ENCODE measurements at regions of chr6 and their contacts with region 1.

Region 1: DNA sequence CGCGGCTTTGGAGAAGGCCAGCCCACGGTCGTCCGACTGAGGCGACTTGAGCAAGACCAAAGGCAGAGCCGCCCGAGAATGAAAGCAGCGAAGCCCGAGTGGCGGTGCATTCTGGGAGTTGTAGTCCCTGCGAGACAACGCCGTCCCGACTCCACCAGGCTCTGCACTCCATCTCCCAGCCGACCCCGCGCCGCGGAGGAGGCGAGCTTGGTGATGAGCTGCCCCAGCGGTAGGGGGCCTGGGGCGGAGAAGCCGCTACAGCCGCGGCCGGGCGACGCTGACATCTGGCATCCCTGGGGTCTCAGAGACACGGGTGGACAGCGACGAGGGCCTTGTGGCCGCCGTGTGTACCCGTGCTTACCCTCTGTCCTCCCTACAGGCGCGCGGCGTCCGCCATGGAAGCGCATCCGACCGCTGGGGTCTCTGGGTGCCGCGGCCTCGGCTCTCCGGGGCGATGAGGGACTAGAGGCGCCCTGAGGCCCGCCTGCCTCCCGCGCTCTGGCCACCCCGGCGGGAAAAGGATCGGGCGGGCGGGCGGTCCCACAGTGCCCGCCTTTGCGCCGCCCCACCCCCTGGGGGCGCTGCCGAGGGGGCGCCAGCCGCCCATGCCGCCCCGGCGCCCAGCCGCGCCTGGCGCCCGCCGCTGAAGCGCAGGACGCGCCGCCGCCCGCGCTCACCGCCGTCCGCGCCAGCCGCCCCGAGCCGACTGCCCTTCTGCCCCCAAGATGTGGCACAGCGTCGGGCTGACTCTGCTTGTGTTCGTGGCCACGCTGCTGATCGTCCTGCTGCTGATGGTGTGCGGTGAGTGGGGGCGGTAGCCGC is at the start of gene SMIM13:
- DNase-seq: peak; percentile 85 to 94 (median 93)
- ATAC-seq: peak; percentile 96
- H3K4me3 ChIP-seq: peak within 1 kb of the TSS; percentile 97
- H3K4me3 Mint-ChIP-seq: peak within 1 kb of the TSS; percentile 83 to 98 (median 97)
- H3K27ac ChIP-seq: peak within 1 kb of the TSS; percentile 88
- H3K27ac Mint-ChIP-seq: peak within 1 kb of the TSS; percentile 89 to 98 (median 97)
- H3K4me1 ChIP-seq: peaks cover 11 to 14% of the 10 kb centered on the region in 2 donors
- H3K4me1 Mint-ChIP-seq: peaks cover 21 to 43% (median 27%) of the 10 kb centered on the region in 7 donors
- H3K27me3 ChIP-seq: no peaks in the 10 kb centered on the region
- H3K27me3 Mint-ChIP-seq: no peaks in the 10 kb centered on the region
- total RNA-seq, gene SMIM13: 4.0 to 9.9 (median 4.4) TPM

Region 2: GRCh38 chr6:10528170-10528981 is 565.4 kb before region 1 on chr6:
- CTCF ChIA-PET with region 1: no interaction called
- POLR2A ChIA-PET with region 1: no interaction called
- intact Hi-C with region 1: loop called in 1 of 2 experiments (anchors 5 kb)
- DNase-seq: peak in 6 of 9 donors; percentile 13 to 36 (median 27)
- ATAC-seq: peak; percentile 70
- H3K4me3 ChIP-seq: peak overlapping the region; percentile 70
- H3K4me3 Mint-ChIP-seq: peak overlapping the region; percentile 87 to 98 (median 94)
- H3K27ac ChIP-seq: peak overlapping the region; percentile 69
- H3K27ac Mint-ChIP-seq: peak overlapping the region; percentile 74 to 95 (median 90)
- H3K4me1 ChIP-seq: peaks cover 10 to 15% of the 10 kb centered on the region in 2 donors
- H3K4me1 Mint-ChIP-seq: peaks cover 32 to 52% (median 44%) of the 10 kb centered on the region in 7 donors
- H3K27me3 ChIP-seq: no peaks in the 10 kb centered on the region
- H3K27me3 Mint-ChIP-seq: peaks cover 0 to 5% (median 0%) of the 10 kb centered on the region in 5 donors

Region 3: DNA sequence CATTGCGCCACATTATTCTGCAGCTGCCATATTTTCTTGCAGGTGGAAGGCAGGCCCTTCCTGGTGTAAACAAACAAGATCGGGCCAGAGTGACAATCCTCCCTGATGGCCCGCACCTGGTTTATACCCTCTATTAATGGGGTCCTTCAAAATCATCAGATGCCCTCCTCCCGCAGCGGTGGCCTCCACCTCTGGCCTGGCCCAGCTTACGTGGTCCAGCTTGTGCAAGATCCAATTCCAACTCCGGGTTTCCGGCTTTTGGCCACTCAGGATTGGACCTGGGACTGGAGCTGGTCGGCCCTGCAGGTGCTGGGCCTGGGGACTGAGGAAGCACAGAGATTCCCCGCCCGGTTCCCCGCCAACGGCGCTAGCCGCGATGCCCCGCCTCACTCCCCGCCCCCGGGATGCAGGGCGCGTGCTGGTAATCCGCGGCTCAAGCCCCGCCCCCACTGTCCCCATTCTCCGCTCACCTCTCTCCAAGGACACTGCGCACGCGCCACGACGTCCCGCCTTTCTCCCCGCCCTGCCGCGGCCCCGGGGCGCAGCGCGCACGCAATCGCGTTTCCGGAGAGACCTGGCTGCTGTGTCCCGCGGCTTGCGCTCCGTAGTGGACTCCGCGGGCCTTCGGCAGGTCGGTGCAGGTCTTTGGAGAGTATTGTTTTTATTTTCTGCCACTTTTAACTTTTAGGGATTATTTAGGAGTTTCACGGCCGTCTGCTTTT is 346.4 kb before region 1 on chr6 and contains the start of gene TMEM14B:
- CTCF ChIA-PET with region 1: interaction called, 3 read pairs
- POLR2A ChIA-PET with region 1: no interaction called
- intact Hi-C with region 1: loop called (anchors 1 kb)
- DNase-seq: peak; percentile 97 to 100 (median 99)
- ATAC-seq: peak; percentile 99
- H3K4me3 ChIP-seq: peak within 1 kb of the TSS; percentile 71
- H3K4me3 Mint-ChIP-seq: peak within 1 kb of the TSS; percentile 85 to 98 (median 91)
- H3K27ac ChIP-seq: peak within 1 kb of the TSS; percentile 79
- H3K27ac Mint-ChIP-seq: peak within 1 kb of the TSS; percentile 82 to 99 (median 96)
- H3K4me1 ChIP-seq: peaks cover 12 to 37% of the 10 kb centered on the region in 2 donors
- H3K4me1 Mint-ChIP-seq: peaks cover 24 to 67% (median 62%) of the 10 kb centered on the region in 7 donors
- H3K27me3 ChIP-seq: no peaks in the 10 kb centered on the region
- H3K27me3 Mint-ChIP-seq: no peaks in the 10 kb centered on the region
- total RNA-seq, gene TMEM14B: 48.6 to 93.8 (median 75.4) TPM

Region 4: DNA sequence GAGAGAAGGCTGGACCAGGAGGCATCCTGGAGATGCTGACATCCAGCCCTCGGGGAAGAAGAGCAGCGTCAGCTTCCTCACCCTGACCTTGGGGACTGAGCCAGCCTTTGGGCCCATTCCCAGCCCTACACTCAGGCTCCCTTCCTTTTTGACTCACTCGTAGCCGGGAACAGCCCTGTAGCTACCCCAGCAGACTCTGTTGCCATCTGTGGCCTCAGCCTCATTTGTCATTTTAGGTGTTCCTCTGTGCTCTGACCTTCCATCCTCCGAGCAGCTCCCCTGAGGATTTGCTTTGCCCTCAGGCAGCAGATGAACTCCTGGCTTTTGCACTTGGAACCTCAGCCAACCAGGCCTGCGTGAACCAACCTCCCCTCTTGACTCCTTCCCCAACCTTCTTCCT is 117.2 kb before region 1 on chr6:
- CTCF ChIA-PET with region 1: no interaction called
- POLR2A ChIA-PET with region 1: no interaction called
- intact Hi-C with region 1: no loop called
- DNase-seq: no peak
- ATAC-seq: no peak
- H3K4me3 ChIP-seq: no peak overlapping the region
- H3K4me3 Mint-ChIP-seq: no peak overlapping the region
- H3K27ac ChIP-seq: no peak overlapping the region
- H3K27ac Mint-ChIP-seq: no peak overlapping the region
- H3K4me1 ChIP-seq: no peaks in the 10 kb centered on the region
- H3K4me1 Mint-ChIP-seq: no peaks in the 10 kb centered on the region
- H3K27me3 ChIP-seq: peaks cover 0 to 3% of the 10 kb centered on the region in 2 donors
- H3K27me3 Mint-ChIP-seq: peaks cover 0 to 18% (median 11%) of the 10 kb centered on the region in 5 donors

Region 5: DNA sequence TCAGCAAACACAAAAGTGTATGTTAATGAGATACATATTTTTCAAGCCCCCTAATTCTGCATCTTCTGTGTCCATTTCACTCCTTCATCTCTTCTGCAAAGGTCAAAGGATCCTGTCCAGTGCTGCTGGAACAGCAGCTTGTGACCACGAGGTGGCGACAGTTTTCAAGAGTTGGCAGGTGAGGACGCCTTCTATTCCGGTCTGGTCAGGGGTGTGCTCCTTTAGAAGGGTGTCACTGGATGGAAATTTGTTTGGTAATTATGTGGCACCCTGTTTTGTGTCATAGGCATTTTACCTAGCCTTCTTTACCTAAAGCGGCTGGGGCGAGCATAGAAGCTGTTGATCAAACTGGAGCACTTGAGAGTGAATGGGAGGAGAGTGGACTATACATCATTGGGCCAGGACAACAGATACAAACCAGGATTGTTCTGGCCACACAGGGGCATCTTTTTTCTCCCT is 50.6 kb after region 1 on chr6:
- CTCF ChIA-PET with region 1: no interaction called
- POLR2A ChIA-PET with region 1: no interaction called
- intact Hi-C with region 1: loop called (anchors 2 kb)
- DNase-seq: peak; percentile 21 to 71 (median 54)
- ATAC-seq: peak; percentile 86
- H3K4me3 ChIP-seq: no peak overlapping the region
- H3K4me3 Mint-ChIP-seq: no peak overlapping the region
- H3K27ac ChIP-seq: no peak overlapping the region
- H3K27ac Mint-ChIP-seq: no peak overlapping the region
- H3K4me1 ChIP-seq: no peaks in the 10 kb centered on the region
- H3K4me1 Mint-ChIP-seq: peaks cover 0 to 7% (median 0%) of the 10 kb centered on the region in 7 donors
- H3K27me3 ChIP-seq: no peaks in the 10 kb centered on the region
- H3K27me3 Mint-ChIP-seq: peaks cover 0 to 5% (median 0%) of the 10 kb centered on the region in 5 donors

Region 6: GRCh38 chr6:11496152-11497060 is 402.6 kb after region 1 on chr6:
- CTCF ChIA-PET with region 1: no interaction called
- POLR2A ChIA-PET with region 1: no interaction called
- intact Hi-C with region 1: loop called (anchors 1 kb)
- DNase-seq: peak; percentile 35 to 85 (median 78)
- ATAC-seq: peak; percentile 95
- H3K4me3 ChIP-seq: no peak overlapping the region
- H3K4me3 Mint-ChIP-seq: no peak overlapping the region
- H3K27ac ChIP-seq: no peak overlapping the region
- H3K27ac Mint-ChIP-seq: no peak overlapping the region
- H3K4me1 ChIP-seq: peaks cover 0 to 10% of the 10 kb centered on the region in 2 donors
- H3K4me1 Mint-ChIP-seq: peaks cover 0 to 3% (median 0%) of the 10 kb centered on the region in 7 donors
- H3K27me3 ChIP-seq: no peaks in the 10 kb centered on the region
- H3K27me3 Mint-ChIP-seq: no peaks in the 10 kb centered on the region

Region 7: DNA sequence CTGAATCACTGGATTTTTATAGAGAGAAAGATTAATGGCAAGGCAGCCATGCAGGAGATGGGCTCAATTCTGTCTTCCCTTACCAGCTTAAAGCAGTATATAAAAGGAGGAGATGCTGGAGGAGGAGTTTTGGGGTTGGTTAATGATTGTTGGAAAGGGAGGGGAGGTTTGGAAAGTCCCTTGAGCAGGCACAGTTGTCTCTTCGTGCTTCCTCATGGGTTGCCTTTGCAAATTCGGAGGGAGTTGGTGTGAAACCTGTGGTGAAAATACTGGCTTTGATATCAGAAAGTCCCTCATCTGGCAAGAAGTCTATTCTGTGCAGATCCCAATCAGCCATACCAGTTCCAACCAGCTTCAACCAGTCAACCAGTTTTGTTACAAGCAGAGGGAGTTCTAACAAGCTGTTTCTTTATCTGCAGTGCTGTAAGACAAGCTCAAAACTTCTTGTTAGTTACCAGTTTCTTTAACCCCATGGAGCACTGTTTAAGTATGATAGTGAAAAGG is 1025.3 kb after region 1 on chr6:
- CTCF ChIA-PET with region 1: no interaction called
- POLR2A ChIA-PET with region 1: no interaction called
- intact Hi-C with region 1: loop called in 1 of 2 experiments (anchors 5 kb)
- DNase-seq: peak in 8 of 9 donors; percentile 16 to 76 (median 48)
- ATAC-seq: peak; percentile 92
- H3K4me3 ChIP-seq: no peak overlapping the region
- H3K4me3 Mint-ChIP-seq: peak overlapping the region in 8 of 10 donors; percentile 1 to 56 (median 35)
- H3K27ac ChIP-seq: no peak overlapping the region
- H3K27ac Mint-ChIP-seq: peak overlapping the region; percentile 28 to 85 (median 68)
- H3K4me1 ChIP-seq: peaks cover 9 to 21% of the 10 kb centered on the region in 2 donors
- H3K4me1 Mint-ChIP-seq: peaks cover 28 to 81% (median 70%) of the 10 kb centered on the region in 7 donors
- H3K27me3 ChIP-seq: no peaks in the 10 kb centered on the region
- H3K27me3 Mint-ChIP-seq: no peaks in the 10 kb centered on the region